Breast epithelium (tissue), 4 donors: ENCODE measurements at regions of chr3 and their contacts with region 1.

Region 1: GRCh38 chr3:150079029-150079739 is 108.5 kb upstream of the PFN2 start:
- DNase-seq: no peak
- H3K4me3 ChIP-seq: no peak overlapping the region
- H3K27ac ChIP-seq: peak overlapping the region; percentile 56 to 72
- H3K4me1 ChIP-seq: peaks cover 0 to 8% of the 10 kb centered on the region in 2 donors
- H3K27me3 ChIP-seq: no peaks in the 10 kb centered on the region
- CTCF ChIP-seq: no peak
- POLR2A ChIP-seq: no peak

Region 2: DNA sequence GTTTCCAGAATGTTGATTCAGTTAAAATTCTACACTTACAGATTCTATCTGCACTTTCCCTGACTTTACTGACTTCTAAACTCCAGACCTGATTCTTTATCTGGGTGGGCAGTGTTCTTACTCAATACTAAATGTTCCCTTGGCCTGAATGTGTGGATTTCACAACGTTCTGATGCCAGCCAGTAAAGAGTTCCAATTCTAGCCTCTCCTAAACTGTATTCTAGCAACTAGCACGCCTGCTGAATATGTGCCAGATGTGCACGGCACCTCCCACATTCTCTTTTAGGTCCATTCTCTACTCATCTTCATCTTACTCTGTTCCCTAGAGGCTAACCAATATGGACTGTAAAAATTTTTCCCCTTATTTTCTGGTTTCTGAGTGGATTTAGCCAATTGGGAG is 1861.0 kb before region 1 on chr3:
- intact Hi-C with region 1: no loop called
- DNase-seq: no peak
- H3K4me3 ChIP-seq: no peak overlapping the region
- H3K27ac ChIP-seq: no peak overlapping the region
- H3K4me1 ChIP-seq: no peaks in the 10 kb centered on the region
- H3K27me3 ChIP-seq: no peaks in the 10 kb centered on the region
- CTCF ChIP-seq: no peak
- POLR2A ChIP-seq: no peak

Region 3: GRCh38 chr3:149702691-149703441 is 376.3 kb before region 1 on chr3:
- intact Hi-C with region 1: loop called (anchors 5 kb)
- DNase-seq: no peak
- H3K4me3 ChIP-seq: no peak overlapping the region
- H3K27ac ChIP-seq: peak overlapping the region; percentile 34 to 68
- H3K4me1 ChIP-seq: no peaks in the 10 kb centered on the region
- H3K27me3 ChIP-seq: no peaks in the 10 kb centered on the region
- CTCF ChIP-seq: no peak
- POLR2A ChIP-seq: no peak

Region 4: GRCh38 chr3:150059241-150059640 is 19.9 kb before region 1 on chr3:
- intact Hi-C with region 1: no loop called
- DNase-seq: no peak
- H3K4me3 ChIP-seq: no peak overlapping the region
- H3K27ac ChIP-seq: no peak overlapping the region
- H3K4me1 ChIP-seq: no peaks in the 10 kb centered on the region
- H3K27me3 ChIP-seq: no peaks in the 10 kb centered on the region
- CTCF ChIP-seq: no peak
- POLR2A ChIP-seq: no peak

Region 5: DNA sequence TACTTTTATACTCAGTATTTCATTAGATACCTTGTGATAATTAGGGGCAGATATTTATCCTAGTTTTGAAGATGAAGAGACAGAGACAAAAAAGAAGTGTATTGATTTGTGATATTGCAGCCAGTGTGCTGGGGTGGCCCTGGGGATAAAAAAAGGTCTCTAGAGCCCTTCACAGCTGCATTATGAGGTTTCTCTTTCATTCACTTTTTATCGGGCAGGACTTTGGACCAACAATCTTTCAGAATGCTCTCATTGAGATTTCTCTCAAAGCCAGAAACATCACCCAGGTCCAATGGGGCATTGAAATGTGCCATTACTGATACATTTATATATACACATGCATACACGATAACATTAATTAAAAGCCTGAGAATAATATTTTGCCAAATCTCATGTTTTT is 503.4 kb after region 1 on chr3:
- intact Hi-C with region 1: no loop called
- DNase-seq: no peak
- H3K4me3 ChIP-seq: no peak overlapping the region
- H3K27ac ChIP-seq: no peak overlapping the region
- H3K4me1 ChIP-seq: no peaks in the 10 kb centered on the region
- H3K27me3 ChIP-seq: no peaks in the 10 kb centered on the region
- CTCF ChIP-seq: no peak
- POLR2A ChIP-seq: no peak